ENCODE measurements at regions of chr9 and their contacts with region 1.

Region 1: GRCh38 chr9:97696803-97697601 is at the start of gene XPA:
- DNase-seq: peak; percentile 98
- H3K4me3 Mint-ChIP-seq: peak within 1 kb of the TSS; percentile 85
- H3K27ac Mint-ChIP-seq: peak within 1 kb of the TSS; percentile 84
- H3K4me1 Mint-ChIP-seq: peaks cover 54% of the 10 kb centered on the region
- H3K27me3 Mint-ChIP-seq: no peaks in the 10 kb centered on the region
- total RNA-seq, gene XPA: 10.6 and 11.3 TPM in 2 replicates

Region 2: GRCh38 chr9:97675655-97676054 is 21.3 kb before region 1 on chr9:
- intact Hi-C with region 1: no loop called
- DNase-seq: no peak
- H3K4me3 Mint-ChIP-seq: no peak overlapping the region
- H3K27ac Mint-ChIP-seq: peak overlapping the region; percentile 25
- H3K4me1 Mint-ChIP-seq: peaks cover 5% of the 10 kb centered on the region
- H3K27me3 Mint-ChIP-seq: no peaks in the 10 kb centered on the region

Region 3: GRCh38 chr9:97803167-97804058 is 106.4 kb after region 1 on chr9:
- intact Hi-C with region 1: loop called (anchors 1 kb)
- DNase-seq: peak; percentile 66
- H3K4me3 Mint-ChIP-seq: peak overlapping the region; percentile 79
- H3K27ac Mint-ChIP-seq: peak overlapping the region; percentile 67
- H3K4me1 Mint-ChIP-seq: peaks cover 17% of the 10 kb centered on the region
- H3K27me3 Mint-ChIP-seq: peaks cover 25% of the 10 kb centered on the region

Region 4: GRCh38 chr9:97906236-97906831 is 209.3 kb after region 1 on chr9:
- intact Hi-C with region 1: loop called (anchors 2 kb)
- DNase-seq: no peak
- H3K4me3 Mint-ChIP-seq: peak overlapping the region; percentile 72
- H3K27ac Mint-ChIP-seq: peak overlapping the region; percentile 98
- H3K4me1 Mint-ChIP-seq: peaks cover 81% of the 10 kb centered on the region
- H3K27me3 Mint-ChIP-seq: no peaks in the 10 kb centered on the region

Region 5: DNA sequence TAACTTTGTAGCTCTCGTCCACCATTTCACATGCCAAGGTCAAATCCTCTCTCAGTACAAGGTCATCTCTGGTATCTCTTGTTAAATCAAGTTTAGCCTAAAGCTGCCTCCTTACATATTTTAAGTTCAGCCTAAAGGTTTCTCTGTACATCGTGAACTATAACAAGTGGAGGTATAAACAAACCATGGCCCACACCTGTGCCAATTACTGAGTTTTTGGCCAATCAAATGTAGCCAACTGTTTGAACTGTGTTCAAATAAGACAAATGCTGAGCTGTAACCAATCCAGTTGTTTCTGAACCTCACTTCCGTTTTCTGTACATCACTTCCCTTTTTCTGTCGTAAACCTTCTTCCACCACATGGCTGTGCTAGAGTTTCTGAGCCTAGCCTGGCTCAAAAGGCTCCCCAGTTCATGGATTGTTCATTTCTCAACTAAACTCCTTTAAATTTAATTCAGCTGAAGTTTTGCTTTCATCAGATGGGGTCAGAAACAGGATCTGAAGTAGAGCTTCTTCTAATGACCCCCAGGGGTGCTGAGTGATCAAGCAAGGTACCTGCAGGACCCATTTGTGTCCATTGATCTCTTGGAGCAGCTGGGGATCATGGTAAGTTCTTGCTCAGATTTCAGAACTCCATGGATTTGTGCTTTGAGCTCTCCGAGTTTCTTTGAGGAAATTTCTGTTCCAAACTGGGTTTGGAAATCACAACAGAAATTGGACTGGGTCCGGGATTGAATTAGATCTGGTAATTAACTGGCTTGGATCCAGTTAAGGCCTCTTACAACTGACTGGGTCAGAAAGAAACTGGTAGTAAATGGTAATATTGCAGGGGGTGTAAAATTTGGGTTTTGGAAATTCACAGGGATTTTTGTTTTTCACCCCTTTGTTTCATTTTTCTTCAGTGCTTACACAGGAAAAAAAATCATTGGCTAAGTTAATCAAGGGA is 348.5 kb after region 1 on chr9:
- intact Hi-C with region 1: loop called (anchors 5 kb)
- DNase-seq: peak; percentile 38
- H3K4me3 Mint-ChIP-seq: peak overlapping the region; percentile 87
- H3K27ac Mint-ChIP-seq: peak overlapping the region; percentile 86
- H3K4me1 Mint-ChIP-seq: peaks cover 41% of the 10 kb centered on the region
- H3K27me3 Mint-ChIP-seq: peaks cover 6% of the 10 kb centered on the region

Region 6: GRCh38 chr9:98118640-98119601 is 421.9 kb after region 1 on chr9 and contains the start of gene TRIM14:
- intact Hi-C with region 1: loop called (anchors 5 kb)
- DNase-seq: peak; percentile 71
- H3K4me3 Mint-ChIP-seq: peak within 1 kb of the TSS; percentile 95
- H3K27ac Mint-ChIP-seq: peak within 1 kb of the TSS; percentile 98
- H3K4me1 Mint-ChIP-seq: peaks cover 42% of the 10 kb centered on the region
- H3K27me3 Mint-ChIP-seq: no peaks in the 10 kb centered on the region
- total RNA-seq, gene TRIM14: 41.7 and 42.0 TPM in 2 replicates

Region 7: DNA sequence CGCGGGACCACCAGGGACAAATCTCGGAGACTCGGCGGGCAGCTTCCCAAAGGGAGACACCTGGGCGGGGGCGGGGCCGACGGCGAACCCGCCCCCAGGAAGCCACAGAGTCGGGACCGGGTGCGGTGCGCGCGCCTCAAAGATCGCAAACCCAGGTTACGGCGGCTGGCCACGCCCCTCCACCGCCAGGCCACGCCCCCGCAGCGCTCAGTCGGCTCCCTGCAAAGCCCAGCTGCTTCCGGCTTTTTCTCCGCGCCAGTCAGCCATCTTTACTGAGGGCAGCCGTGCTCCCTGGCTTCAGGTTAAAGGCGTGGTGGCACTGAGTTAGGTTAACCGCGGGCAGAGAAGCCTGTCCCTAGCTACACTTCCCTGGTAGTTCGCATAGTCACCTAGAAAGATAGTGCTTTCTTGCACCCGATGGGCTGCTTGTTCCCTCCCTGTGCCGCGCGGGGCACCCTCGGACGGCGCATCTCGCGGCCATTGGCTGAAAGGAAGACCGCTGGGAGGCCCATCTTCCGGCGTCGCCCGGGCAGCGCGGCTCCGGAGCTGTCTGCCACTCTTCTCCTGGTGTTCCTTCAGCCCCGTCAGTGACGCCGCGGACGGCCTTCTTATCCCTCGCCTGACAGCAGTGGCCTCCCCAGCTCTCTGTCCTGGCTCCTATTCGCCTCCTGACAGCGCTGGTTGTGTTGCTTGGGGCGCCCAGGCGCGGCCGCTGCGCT is 558.7 kb after region 1 on chr9 and contains the start of gene TBC1D2:
- intact Hi-C with region 1: loop called (anchors 5 kb)
- DNase-seq: peak; percentile 96
- H3K4me3 Mint-ChIP-seq: peak within 1 kb of the TSS; percentile 89
- H3K27ac Mint-ChIP-seq: peak within 1 kb of the TSS; percentile 94
- H3K4me1 Mint-ChIP-seq: peaks cover 27% of the 10 kb centered on the region
- H3K27me3 Mint-ChIP-seq: peaks cover 3% of the 10 kb centered on the region
- total RNA-seq, gene TBC1D2: 1.8 and 2.2 TPM in 2 replicates